Caco-2 (cell line): ENCODE measurements at regions of chr4 and their contacts with region 1.

Region 1: GRCh38 chr4:185651137-185651677 is 115.9 kb upstream of the PDLIM3 start:
- DNase-seq: peak in 1 of 2 experiments; percentile 49
- H3K4me3 ChIP-seq: no peak overlapping the region
- H3K4me3 Mint-ChIP-seq: peak overlapping the region; percentile 18
- H3K27ac Mint-ChIP-seq: peak overlapping the region; percentile 74
- H3K4me1 ChIP-seq: peaks cover 18% of the 10 kb centered on the region
- H3K4me1 Mint-ChIP-seq: peaks cover 18% of the 10 kb centered on the region
- H3K27me3 ChIP-seq: no peaks in the 10 kb centered on the region
- H3K27me3 Mint-ChIP-seq: no peaks in the 10 kb centered on the region
- CTCF ChIP-seq: no peak

Region 2: DNA sequence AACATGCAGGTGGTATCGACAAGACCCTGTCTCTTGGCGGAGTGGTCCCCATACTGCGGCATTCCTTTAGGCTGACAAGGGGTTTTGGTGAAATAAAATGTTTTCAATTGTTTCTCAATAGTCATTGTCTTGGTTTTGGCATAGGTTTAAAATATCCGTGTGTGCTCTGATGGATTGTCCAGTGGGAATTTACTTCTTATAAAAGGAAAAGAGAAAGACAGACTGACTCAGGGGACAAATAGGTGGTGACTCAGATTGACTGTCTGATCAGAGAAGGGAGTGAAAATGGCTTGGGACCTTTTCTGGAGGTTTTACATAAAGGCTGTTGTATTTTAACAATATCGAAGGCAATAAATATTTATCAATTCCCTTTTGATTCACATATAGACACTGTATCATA is 31.0 kb after region 1 on chr4:
- CTCF ChIA-PET with region 1: no interaction called
- POLR2A ChIA-PET with region 1: no interaction called
- intact Hi-C with region 1: no loop called
- DNase-seq: no peak
- H3K4me3 ChIP-seq: no peak overlapping the region
- H3K4me3 Mint-ChIP-seq: no peak overlapping the region
- H3K27ac Mint-ChIP-seq: no peak overlapping the region
- H3K4me1 ChIP-seq: no peaks in the 10 kb centered on the region
- H3K4me1 Mint-ChIP-seq: no peaks in the 10 kb centered on the region
- H3K27me3 ChIP-seq: no peaks in the 10 kb centered on the region
- H3K27me3 Mint-ChIP-seq: no peaks in the 10 kb centered on the region
- CTCF ChIP-seq: no peak

Region 3: DNA sequence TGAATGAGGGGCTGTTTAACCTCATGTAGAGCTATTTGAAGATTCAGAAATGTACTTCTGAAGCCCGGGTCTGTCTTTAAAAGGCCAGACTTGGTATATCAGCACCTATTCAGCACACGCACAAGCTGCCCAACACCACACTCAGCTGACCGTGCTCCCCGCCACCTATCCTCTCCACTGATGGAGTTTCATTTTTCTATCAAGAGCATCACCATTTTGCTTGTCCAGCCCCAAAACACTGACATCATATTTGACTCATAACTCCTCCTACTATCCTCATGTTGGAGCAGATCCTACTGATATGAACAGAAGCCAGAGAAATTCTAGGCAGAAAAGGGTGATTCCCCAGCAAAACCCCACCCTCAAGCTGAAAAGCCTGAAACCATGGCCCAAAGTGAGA is 60.5 kb after region 1 on chr4:
- CTCF ChIA-PET with region 1: no interaction called
- POLR2A ChIA-PET with region 1: no interaction called
- intact Hi-C with region 1: loop called (anchors 2 kb)
- DNase-seq: no peak
- H3K4me3 ChIP-seq: no peak overlapping the region
- H3K4me3 Mint-ChIP-seq: peak overlapping the region; percentile 44
- H3K27ac Mint-ChIP-seq: peak overlapping the region; percentile 96
- H3K4me1 ChIP-seq: peaks cover 37% of the 10 kb centered on the region
- H3K4me1 Mint-ChIP-seq: peaks cover 35% of the 10 kb centered on the region
- H3K27me3 ChIP-seq: no peaks in the 10 kb centered on the region
- H3K27me3 Mint-ChIP-seq: no peaks in the 10 kb centered on the region
- CTCF ChIP-seq: no peak

Region 4: GRCh38 chr4:185774845-185775680 is 123.9 kb after region 1 on chr4:
- CTCF ChIA-PET with region 1: no interaction called
- POLR2A ChIA-PET with region 1: no interaction called
- intact Hi-C with region 1: no loop called
- DNase-seq: no peak
- H3K4me3 ChIP-seq: no peak overlapping the region
- H3K4me3 Mint-ChIP-seq: no peak overlapping the region
- H3K27ac Mint-ChIP-seq: no peak overlapping the region
- H3K4me1 ChIP-seq: no peaks in the 10 kb centered on the region
- H3K4me1 Mint-ChIP-seq: peaks cover 26% of the 10 kb centered on the region
- H3K27me3 ChIP-seq: no peaks in the 10 kb centered on the region
- H3K27me3 Mint-ChIP-seq: no peaks in the 10 kb centered on the region
- CTCF ChIP-seq: no peak

Region 5: DNA sequence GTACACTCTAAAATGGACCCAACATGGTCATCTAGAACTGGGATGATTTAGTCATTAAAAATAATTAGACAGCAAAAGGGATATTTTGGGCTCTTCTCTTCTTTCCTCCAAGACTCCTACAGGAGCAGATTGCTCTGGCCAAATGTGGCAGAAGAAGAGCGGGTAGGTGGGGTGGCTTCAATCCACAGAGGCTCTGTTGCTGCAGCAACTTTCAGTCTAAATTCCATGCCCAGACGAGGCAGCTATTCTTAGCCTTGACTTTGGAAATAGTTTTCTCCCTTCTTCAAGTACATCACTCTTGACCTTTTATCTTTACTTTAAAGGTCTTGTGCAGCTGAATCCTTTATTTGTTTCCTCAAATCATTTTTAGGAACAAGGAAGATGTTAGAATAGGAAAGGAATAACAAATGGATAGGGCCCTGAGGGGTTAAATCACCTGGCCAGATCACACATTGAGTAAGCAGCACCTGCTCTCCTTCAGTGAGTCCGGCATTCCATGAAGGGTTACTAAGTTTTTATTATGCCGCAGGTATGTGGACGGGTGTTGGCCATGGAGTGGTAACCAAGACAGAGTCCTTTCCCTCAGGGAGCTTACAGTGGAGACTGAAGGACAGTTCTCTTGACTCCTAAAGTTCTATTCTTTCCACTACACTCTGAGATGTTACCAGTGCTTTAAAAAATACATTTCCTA is 180.1 kb after region 1 on chr4:
- CTCF ChIA-PET with region 1: no interaction called
- POLR2A ChIA-PET with region 1: no interaction called
- intact Hi-C with region 1: loop called (anchors 1 kb)
- DNase-seq: peak; percentile 28 to 66
- H3K4me3 ChIP-seq: no peak overlapping the region
- H3K4me3 Mint-ChIP-seq: peak overlapping the region; percentile 36
- H3K27ac Mint-ChIP-seq: peak overlapping the region; percentile 65
- H3K4me1 ChIP-seq: peaks cover 56% of the 10 kb centered on the region
- H3K4me1 Mint-ChIP-seq: peaks cover 32% of the 10 kb centered on the region
- H3K27me3 ChIP-seq: no peaks in the 10 kb centered on the region
- H3K27me3 Mint-ChIP-seq: no peaks in the 10 kb centered on the region
- CTCF ChIP-seq: no peak

Region 6: GRCh38 chr4:186216465-186217024 is 565.3 kb after region 1 on chr4:
- CTCF ChIA-PET with region 1: no interaction called
- POLR2A ChIA-PET with region 1: no interaction called
- intact Hi-C with region 1: no loop called
- DNase-seq: no peak
- H3K4me3 ChIP-seq: no peak overlapping the region
- H3K4me3 Mint-ChIP-seq: no peak overlapping the region
- H3K27ac Mint-ChIP-seq: no peak overlapping the region
- H3K4me1 ChIP-seq: no peaks in the 10 kb centered on the region
- H3K4me1 Mint-ChIP-seq: no peaks in the 10 kb centered on the region
- H3K27me3 ChIP-seq: no peaks in the 10 kb centered on the region
- H3K27me3 Mint-ChIP-seq: peaks cover 13% of the 10 kb centered on the region
- CTCF ChIP-seq: no peak